Activated B cell treated with CpG ODN at 0.5 μM for 24 hours (primary cell): ENCODE measurements at regions of chr12 and their contacts with region 1.

Region 1: GRCh38 chr12:4276524-4277204 is 3.1 kb downstream of the CCND2 start:
- DNase-seq: peak; percentile 61
- ATAC-seq: peak; percentile 40
- H3K4me3 Mint-ChIP-seq: peak overlapping the region; percentile 91
- H3K27ac Mint-ChIP-seq: peak overlapping the region; percentile 26
- H3K4me1 Mint-ChIP-seq: peaks cover 34% of the 10 kb centered on the region
- H3K27me3 Mint-ChIP-seq: no peaks in the 10 kb centered on the region
- CTCF ChIP-seq: peak; percentile 48

Region 2: GRCh38 chr12:3752741-3753486 is 523.8 kb before region 1 on chr12 and contains the start of gene CRACR2A:
- CTCF ChIA-PET with region 1: no interaction called
- POLR2A ChIA-PET with region 1: no interaction called
- intact Hi-C with region 1: loop called (anchors 2 kb)
- DNase-seq: peak; percentile 85
- ATAC-seq: peak; percentile 87
- H3K4me3 Mint-ChIP-seq: peak within 1 kb of the TSS; percentile 88
- H3K27ac Mint-ChIP-seq: peak within 1 kb of the TSS; percentile 93
- H3K4me1 Mint-ChIP-seq: peaks cover 25% of the 10 kb centered on the region
- H3K27me3 Mint-ChIP-seq: no peaks in the 10 kb centered on the region
- CTCF ChIP-seq: no peak
- total RNA-seq, gene CRACR2A: 22.7 and 25.8 TPM in 2 replicates

Region 3: DNA sequence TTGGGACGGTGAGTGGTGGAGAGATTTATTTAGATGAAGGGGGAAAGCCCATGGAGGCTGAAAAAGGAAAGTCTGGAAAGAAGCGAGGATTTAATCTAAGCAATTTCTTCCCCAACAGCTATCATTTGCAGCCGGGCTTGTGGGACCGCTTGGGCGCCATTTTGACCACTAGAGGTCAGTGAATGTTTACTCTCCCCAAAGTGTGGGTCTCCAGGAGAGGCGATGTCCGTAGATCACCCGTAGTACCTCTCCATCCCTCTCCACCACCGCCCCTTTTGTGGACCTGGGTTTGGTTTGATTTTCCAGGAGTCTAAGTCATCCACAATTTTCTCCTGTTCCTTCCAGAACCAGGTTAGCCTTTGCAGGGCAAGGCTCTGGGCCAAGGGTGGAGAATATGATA is 312.2 kb before region 1 on chr12:
- CTCF ChIA-PET with region 1: interaction called, 48 read pairs
- POLR2A ChIA-PET with region 1: interaction called, 3 read pairs
- intact Hi-C with region 1: loop called (anchors 1 kb)
- DNase-seq: no peak
- ATAC-seq: no peak
- H3K4me3 Mint-ChIP-seq: no peak overlapping the region
- H3K27ac Mint-ChIP-seq: no peak overlapping the region
- H3K4me1 Mint-ChIP-seq: peaks cover 9% of the 10 kb centered on the region
- H3K27me3 Mint-ChIP-seq: peaks cover 4% of the 10 kb centered on the region
- CTCF ChIP-seq: no peak

Region 4: DNA sequence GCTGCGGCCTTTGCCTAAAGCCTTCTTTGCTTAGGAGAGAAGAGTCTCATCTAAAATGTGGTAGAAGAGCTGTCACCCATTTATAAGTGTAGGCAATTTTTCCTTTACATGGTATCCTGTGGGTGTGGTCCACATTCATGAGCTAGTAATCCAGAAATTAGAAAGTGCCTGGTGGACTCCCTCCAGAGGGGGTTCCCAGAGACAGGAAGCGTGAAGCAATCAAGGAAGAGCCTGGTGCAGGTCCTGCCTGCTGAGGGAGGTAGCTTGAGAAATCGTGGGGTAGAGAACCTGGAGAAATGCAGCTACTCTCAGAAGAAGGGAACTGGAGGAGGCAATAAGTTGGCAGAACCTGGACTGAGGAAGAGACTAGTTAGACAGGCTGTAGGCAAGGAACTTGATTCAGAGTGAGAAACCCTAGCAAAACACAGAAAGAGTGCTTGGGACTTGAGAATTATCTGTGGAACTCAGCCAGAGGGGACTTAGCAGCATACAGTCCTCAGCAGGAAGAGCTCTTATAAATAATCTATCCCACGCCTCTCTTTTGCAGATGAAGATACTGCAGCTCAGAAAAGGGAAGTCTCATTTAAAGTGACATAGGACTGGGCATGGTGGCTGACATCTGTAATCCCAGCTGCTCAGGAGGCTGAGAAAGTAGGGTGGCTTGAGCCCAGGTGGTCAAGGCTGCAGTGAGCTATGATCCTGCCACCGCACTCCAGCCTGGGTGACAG is 185.5 kb before region 1 on chr12:
- CTCF ChIA-PET with region 1: interaction called, 10 read pairs
- POLR2A ChIA-PET with region 1: interaction called, 3 read pairs
- intact Hi-C with region 1: no loop called
- DNase-seq: no peak
- ATAC-seq: no peak
- H3K4me3 Mint-ChIP-seq: no peak overlapping the region
- H3K27ac Mint-ChIP-seq: no peak overlapping the region
- H3K4me1 Mint-ChIP-seq: peaks cover 4% of the 10 kb centered on the region
- H3K27me3 Mint-ChIP-seq: peaks cover 8% of the 10 kb centered on the region
- CTCF ChIP-seq: no peak

Region 5: DNA sequence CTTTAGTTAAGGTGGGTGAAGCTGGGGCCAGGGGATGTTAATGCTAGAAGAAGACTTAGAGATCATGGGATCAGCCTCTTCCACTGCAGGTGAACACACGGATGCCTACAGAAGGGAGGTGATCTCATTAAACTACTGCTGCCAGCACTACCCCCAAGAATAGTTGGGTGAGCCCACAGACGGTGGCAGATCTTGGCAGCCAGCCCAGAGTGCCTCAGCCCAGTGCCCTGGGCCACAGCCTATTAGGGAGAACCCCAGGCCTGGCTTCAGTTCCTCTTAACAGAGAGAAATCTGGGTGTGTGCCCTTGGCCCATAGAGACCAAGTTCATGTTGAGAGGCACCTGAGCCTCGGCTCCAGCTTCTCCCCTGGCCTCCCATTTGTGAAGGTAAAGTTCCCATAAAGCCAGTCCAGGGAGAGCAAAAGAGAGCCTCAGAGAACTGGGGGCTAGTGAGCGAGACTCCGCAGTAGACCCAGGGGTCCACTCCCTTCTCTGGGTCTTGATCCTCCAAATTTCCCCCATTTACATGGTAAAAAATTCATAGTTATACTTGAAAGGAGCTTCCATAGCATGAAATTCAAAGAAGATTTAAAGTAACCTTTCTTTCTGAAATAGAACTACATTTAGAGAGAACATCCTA is 128.1 kb before region 1 on chr12:
- CTCF ChIA-PET with region 1: interaction called, 22 read pairs
- POLR2A ChIA-PET with region 1: interaction called, 291 read pairs
- intact Hi-C with region 1: loop called (anchors 1 kb)
- DNase-seq: peak; percentile 80
- ATAC-seq: peak; percentile 83
- H3K4me3 Mint-ChIP-seq: peak overlapping the region; percentile 75
- H3K27ac Mint-ChIP-seq: peak overlapping the region; percentile 92
- H3K4me1 Mint-ChIP-seq: peaks cover 95% of the 10 kb centered on the region
- H3K27me3 Mint-ChIP-seq: no peaks in the 10 kb centered on the region
- CTCF ChIP-seq: no peak

Region 6: GRCh38 chr12:4223249-4223845 is 53.3 kb before region 1 on chr12:
- CTCF ChIA-PET with region 1: interaction called, 6 read pairs
- POLR2A ChIA-PET with region 1: interaction called, 189 read pairs
- intact Hi-C with region 1: no loop called
- DNase-seq: no peak
- ATAC-seq: peak; percentile 40
- H3K4me3 Mint-ChIP-seq: peak overlapping the region; percentile 47
- H3K27ac Mint-ChIP-seq: peak overlapping the region; percentile 16
- H3K4me1 Mint-ChIP-seq: peaks cover 35% of the 10 kb centered on the region
- H3K27me3 Mint-ChIP-seq: no peaks in the 10 kb centered on the region
- CTCF ChIP-seq: no peak